ENCODE measurements at regions of chr10 and their contacts with region 1.

Region 1: DNA sequence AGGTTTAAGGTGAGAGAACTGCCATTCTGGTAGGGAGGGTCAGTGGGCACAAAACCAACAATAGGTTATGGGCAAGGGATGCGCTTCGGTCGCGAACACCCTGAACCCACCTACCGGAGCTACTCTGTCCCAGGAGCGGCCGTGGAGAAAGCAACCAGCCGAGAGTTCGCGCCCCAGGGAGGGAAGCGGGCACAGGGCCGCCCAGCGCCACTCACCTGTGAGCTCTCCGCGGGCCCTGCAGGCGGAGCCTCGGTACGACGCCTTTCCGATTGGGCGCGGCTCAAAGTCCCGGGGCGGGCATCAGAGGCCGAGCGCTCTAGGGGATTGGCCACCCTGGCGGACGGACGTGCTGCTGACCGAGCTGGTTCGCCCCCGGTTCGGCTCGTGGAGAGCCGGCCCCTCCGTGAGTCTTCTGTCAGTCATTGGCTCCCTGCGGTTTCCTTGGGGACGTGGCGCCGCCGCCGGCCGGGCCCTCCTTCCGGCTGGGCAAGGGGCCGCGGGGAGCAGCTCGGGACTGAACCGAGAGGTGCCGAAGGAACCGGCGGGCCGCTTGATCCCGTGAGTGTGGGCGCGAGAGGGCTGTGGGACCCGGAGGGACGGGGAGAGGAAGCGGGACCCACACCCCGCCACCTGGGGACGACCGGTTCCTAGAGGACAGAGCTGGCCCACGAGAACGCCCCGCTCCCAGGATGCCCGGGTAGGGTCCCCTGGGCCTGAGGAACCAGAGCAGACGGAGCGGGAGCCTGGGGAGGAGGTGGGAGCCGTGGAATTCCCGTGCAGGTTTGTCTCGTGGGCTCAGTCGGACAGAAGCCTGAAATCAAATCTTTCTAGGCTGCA is at the start of gene ENTPD7:
- DNase-seq: peak; percentile 95 to 99
- ATAC-seq: peak; percentile 98 to 99
- H3K4me3 ChIP-seq: peak within 1 kb of the TSS; percentile 81
- H3K27ac ChIP-seq: peak within 1 kb of the TSS; percentile 78 to 90
- H3K4me1 ChIP-seq: peaks cover 19% of the 10 kb centered on the region
- CTCF ChIP-seq: no peak
- EP300 ChIP-seq: no peak
- POLR2A ChIP-seq: peak; percentile 74
- RAD21 ChIP-seq: no peak
- polyA plus RNA-seq, gene ENTPD7: 10.4 and 10.7 TPM in 2 replicates

Region 2: DNA sequence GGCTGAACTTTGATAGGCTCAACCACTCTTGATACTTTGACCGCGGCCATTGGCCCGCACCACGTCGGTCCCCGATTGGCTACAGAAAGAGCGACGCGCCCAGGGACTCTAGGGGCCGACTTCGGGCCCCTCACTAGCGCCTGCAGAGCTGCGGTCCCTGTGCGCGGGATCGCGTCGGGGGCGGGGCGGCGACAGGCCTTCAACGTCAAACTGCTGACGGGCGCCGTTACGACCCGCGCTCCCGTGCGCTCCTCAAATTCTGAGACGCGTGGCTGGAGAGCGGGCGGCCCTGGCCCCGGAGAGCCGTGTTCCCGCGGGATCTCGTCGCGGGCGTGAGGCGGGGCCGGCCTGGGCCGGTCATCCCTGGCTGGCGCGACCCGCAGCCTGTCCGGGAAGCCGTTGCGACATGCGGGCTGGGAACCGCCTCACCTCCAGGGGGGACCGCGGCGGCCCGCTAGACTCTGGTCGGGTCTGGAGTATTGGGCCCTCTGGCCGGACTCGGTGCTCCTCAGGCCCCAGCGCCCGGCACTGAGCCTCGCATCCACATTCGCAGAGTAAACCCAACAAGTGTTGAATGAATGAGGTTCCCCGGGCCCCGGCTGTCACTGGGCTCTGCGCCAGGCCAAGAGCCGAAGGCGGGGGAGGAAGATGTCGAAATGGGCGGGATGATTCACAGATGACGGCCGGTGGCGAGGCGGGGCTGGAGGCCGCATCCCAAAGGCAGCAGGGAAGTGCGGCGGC is 38.4 kb before region 1 on chr10:
- CTCF ChIA-PET with region 1: no interaction called
- POLR2A ChIA-PET with region 1: interaction called, 46 read pairs
- DNase-seq: peak; percentile 84 to 96
- ATAC-seq: peak; percentile 89 to 96
- H3K4me3 ChIP-seq: peak overlapping the region; percentile 55
- H3K27ac ChIP-seq: peak overlapping the region; percentile 95
- H3K4me1 ChIP-seq: peaks cover 27% of the 10 kb centered on the region
- CTCF ChIP-seq: no peak
- EP300 ChIP-seq: no peak
- POLR2A ChIP-seq: peak; percentile 85
- RAD21 ChIP-seq: no peak; a peak in 1 of 5 replicates

Region 3: GRCh38 chr10:99630439-99630838 is 28.8 kb before region 1 on chr10:
- CTCF ChIA-PET with region 1: interaction called, 10 read pairs
- POLR2A ChIA-PET with region 1: interaction called, 3 read pairs
- DNase-seq: peak in 1 of 2 experiments; percentile 51
- ATAC-seq: peak; percentile 56 to 80; a peak in 5 of 6 replicates
- H3K4me3 ChIP-seq: no peak overlapping the region
- H3K27ac ChIP-seq: 0 out of 6 replicates have a peak overlapping the region, but pooled peaks of 1 of the 2 experiments have one; percentile 16
- H3K4me1 ChIP-seq: peaks cover 6% of the 10 kb centered on the region; the same call in 1 of the 3 replicates
- CTCF ChIP-seq: peak; percentile 54
- EP300 ChIP-seq: no peak
- POLR2A ChIP-seq: no peak
- RAD21 ChIP-seq: peak; percentile 57 to 72